Posterior cingulate gyrus (tissue), 11 donors: ENCODE measurements at regions of chr11 and their contacts with region 1.

Region 1: DNA sequence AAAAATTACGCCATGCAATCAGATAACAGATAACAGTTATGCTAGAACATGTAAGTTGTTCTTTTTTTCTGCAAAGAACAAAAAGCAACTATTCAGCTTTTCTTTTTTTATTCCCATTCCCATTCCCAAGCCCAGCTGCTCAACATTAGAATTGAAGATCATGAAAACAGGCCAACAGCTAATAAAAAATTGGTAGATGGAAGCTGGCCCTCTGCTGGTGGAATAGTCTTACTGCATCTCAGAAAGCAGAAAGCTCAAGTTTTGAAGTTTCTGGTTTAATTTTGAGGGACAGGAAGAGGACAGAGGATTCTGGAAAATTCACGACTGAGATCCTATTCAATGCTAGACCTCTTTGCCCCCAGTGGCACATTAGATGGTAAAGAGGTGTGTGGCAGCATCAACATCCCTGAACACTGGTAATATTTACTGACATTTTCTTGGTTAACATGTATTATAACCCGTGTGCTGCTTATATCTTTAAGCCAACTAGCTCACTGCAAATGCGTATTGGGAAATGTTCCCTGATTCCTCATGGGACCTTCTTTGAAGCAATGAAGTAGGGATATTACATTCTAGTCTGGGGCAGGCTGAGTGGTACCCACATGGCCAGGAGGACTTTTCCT is 591.2 kb downstream of the OPCML start:
- DNase-seq: peak in 2 of 10 donors; percentile 39 to 51

Region 2: DNA sequence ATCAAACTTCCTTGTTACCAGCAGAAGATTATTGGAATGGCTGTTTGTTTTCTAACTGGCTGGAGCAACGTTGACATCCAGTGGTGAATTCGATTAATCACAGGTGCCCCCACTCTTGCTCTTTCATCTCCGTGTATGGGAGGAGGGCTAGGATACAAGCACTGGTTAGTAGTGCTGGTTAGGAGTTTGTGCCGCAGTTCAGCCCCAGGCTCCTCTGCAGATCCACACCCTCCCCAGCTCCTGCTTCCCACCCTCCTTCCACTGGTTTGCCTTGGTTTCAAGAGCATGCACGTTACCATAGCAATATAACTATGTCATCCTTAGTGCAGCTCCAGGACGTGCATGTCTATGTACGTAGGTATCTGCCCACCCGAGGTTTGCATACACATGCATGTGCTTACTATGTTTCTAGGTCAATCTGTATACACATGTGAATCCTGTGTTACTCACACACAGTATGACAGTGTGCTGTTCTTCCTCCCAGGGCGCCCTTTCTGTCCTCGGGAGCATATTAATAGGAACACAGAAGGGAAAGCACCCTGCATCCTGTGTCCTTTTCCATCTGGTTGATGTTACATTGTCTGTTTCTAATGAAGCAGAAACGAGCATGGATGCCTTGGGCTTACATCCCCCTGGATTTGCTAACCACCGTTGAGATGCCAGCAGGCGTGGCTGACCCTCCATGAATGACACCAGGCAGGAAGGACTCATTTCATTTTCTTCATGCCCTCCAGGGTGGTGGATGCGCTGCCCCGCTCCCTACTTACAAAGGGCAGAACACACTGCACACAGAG is 51.9 kb after region 1 on chr11:
- intact Hi-C with region 1: loop called (anchors 1 kb)
- DNase-seq: peak in 2 of 10 donors; percentile 38 to 75

Region 3: DNA sequence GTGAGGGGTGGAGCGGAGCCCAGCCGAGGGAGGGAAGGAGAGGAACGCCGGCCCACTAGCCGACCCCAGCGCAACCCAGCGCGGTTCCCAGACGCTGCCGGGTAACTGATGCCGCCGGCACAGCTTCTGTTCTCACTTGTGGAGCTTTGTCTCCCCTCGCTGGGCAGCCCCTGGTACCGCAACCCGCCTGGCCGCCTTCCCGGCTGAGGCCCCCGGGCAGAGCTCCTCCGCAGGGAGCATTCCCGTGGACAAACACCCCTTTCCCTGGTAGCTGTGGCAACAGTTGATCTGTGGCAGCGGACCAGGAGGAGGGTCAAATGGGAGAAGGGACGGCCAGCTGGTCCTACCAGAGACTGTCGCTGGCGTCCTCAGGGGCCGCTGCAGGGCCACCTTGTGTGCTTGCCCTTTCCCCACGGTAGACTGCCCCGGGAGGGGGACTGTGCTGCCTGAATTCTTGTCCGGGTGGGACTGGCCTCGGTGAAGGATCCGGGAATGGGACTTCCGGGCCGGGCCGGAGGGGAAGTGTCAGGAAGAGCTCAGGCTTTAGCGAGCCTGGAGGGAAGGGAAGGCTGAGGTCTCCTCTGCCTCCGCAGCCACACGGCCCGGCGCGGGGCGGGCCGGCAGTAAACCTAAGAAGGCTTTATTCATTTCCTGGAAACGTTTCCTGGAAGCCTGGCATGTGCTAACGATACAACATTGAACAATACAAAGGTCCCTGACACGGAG is 123.2 kb after region 1 on chr11:
- intact Hi-C with region 1: loop called (anchors 5 kb)
- DNase-seq: peak; percentile 70 to 96 (median 74)